GM13977 (cell line): ENCODE measurements at regions of chr3 and their contacts with region 1.

Region 1: GRCh38 chr3:187739561-187740332 is 5.5 kb downstream of the BCL6 start:
- DNase-seq: peak; percentile 82
- CTCF ChIP-seq: peak; percentile 99

Region 2: DNA sequence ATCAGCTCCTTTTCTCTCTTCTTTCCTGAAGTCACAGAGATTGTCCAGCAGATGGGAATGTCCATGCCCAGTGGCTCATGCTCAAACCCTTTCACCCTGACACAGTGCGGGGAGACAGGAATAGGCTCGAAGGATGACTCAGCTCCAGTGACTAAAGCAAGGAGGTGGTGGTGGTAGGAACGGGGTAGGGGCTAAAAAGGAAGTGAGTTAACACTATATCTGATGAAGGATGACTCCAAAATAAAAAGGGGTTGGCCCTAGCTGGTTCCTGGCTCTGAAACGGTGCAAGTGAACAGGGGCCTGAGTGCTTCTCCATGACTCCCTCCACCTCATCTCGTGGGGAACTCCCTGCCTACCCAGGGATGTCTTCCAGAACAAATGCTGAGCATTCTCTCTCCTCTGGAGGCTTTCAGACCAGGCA is 246.8 kb after region 1 on chr3:
- in situ Hi-C with region 1: no loop called
- DNase-seq: no peak
- CTCF ChIP-seq: no peak

Region 3: GRCh38 chr3:188123170-188123905 is 383.6 kb after region 1 on chr3:
- in situ Hi-C with region 1: no loop called
- DNase-seq: no peak
- CTCF ChIP-seq: no peak

Region 4: GRCh38 chr3:188954590-188955208 is 1215.0 kb after region 1 on chr3:
- in situ Hi-C with region 1: loop called (anchors 5 kb)
- DNase-seq: peak; percentile 71
- CTCF ChIP-seq: peak; percentile 91